K562 (cell line): ENCODE measurements at regions of chr11 and their contacts with region 1.

Region 1: DNA sequence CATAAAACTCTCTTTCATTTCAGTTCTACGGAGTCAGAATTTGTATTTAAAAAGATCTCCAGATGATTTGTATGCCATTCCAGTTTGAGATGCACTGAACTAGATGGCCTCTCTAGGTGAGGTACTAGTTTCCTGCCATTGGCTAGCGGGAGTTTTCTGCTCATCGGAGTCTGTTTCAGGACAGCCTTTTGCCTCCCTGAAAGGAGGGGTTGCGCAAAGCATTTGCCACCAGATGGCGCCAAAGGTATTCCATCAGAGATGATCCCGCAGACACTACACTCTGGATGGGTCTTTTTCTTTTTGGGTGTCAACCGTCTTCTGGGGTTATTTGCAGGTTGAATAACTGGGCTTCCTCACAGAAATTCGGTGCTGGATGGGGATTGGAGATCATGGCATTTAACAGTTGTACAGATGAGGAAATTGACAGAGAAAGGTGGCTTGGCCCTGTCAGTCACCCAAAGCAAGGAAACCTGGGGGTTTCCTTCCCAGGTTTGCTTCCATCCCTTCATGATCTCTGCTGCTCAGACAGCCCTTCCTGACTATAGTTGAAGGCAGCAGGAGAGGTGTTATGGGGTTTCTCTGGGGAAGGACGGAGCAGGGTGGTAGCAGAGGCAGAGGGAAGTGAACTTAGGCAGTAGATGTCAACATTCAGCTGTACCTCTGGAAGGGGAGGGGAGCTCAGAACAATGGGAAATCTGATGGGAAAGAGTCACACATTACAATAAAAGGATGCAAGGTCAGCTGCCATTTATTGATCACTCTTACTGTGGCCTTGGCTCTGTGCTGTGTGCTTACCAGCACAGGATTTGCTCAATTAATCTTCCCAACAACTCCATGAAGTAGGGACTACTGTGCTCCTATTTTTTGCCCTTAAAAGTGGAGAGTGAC is 81.6 kb downstream of the CCDC81 start:
- DNase-seq: peak; percentile 77 to 86 (median 84)
- ATAC-seq: peak; percentile 98
- H3K4me3 ChIP-seq: no peak overlapping the region
- H3K27ac ChIP-seq: no peak overlapping the region
- H3K4me1 ChIP-seq: no peaks in the 10 kb centered on the region
- H3K27me3 ChIP-seq: no peaks in the 10 kb centered on the region
- CTCF ChIP-seq: peak; percentile 83 to 93 (median 92)
- EP300 ChIP-seq: no peak
- POLR2A ChIP-seq: no peak
- RAD21 ChIP-seq: peak; percentile 97 to 98

Region 2: GRCh38 chr11:85854557-85855340 is 601.5 kb before region 1 on chr11:
- CTCF ChIA-PET with region 1: no interaction called
- POLR2A ChIA-PET with region 1: no interaction called
- in situ Hi-C with region 1: no loop called
- intact Hi-C with region 1: loop called (anchors 5 kb)
- DNase-seq: peak; percentile 90 to 94 (median 92)
- ATAC-seq: peak; percentile 99
- H3K4me3 ChIP-seq: peak overlapping the region; percentile 33
- H3K27ac ChIP-seq: peak overlapping the region; percentile 56
- H3K4me1 ChIP-seq: peaks cover 4 to 11% of the 10 kb centered on the region in 2 experiments; a peak in 2 of 5 replicates
- H3K27me3 ChIP-seq: no peaks in the 10 kb centered on the region
- CTCF ChIP-seq: peak; percentile 85 to 93 (median 88)
- EP300 ChIP-seq: no peak
- POLR2A ChIP-seq: peak; percentile 76
- RAD21 ChIP-seq: peak; percentile 91 to 97

Region 3: GRCh38 chr11:86408845-86409244 is 47.5 kb before region 1 on chr11:
- CTCF ChIA-PET with region 1: no interaction called
- POLR2A ChIA-PET with region 1: no interaction called
- in situ Hi-C with region 1: no loop called
- intact Hi-C with region 1: no loop called
- DNase-seq: no peak
- ATAC-seq: no peak
- H3K4me3 ChIP-seq: no peak overlapping the region
- H3K27ac ChIP-seq: no peak overlapping the region
- H3K4me1 ChIP-seq: no peaks in the 10 kb centered on the region
- H3K27me3 ChIP-seq: peaks cover 0 to 13% of the 10 kb centered on the region in 2 experiments; a peak in 2 of 5 replicates
- CTCF ChIP-seq: peak in 1 of 3 experiments; percentile 27; a peak in 3 of 6 replicates
- EP300 ChIP-seq: no peak
- POLR2A ChIP-seq: no peak
- RAD21 ChIP-seq: no peak

Region 4: DNA sequence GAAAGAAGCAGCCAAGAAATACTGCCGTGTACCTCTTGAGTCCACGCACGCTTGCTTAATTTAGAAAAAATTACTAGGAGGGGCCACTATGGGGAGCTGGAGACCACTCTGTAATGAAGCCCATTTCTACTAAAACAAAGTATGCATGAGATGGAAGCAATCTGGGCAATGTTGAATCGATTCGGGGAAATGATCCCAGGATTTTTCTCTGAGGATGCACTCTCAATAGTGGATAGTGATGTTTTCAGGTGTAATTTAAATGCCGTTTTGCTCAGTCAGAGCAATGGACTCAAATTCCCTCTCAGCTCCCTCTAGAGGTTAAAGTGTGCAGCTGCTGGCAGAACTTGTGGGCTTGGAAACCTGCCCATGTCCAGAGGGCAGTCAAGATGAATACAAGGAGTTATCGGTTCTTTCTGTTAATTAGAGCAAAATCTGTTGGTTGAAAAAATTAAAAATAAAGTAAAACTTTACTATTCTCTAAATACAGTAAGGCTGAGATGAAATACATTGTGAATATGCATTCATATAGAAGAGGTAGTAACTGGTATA is 152.0 kb after region 1 on chr11:
- CTCF ChIA-PET with region 1: interaction called, 4 read pairs
- POLR2A ChIA-PET with region 1: no interaction called
- in situ Hi-C with region 1: no loop called
- intact Hi-C with region 1: loop called (anchors 1 kb)
- DNase-seq: peak; percentile 62 to 76 (median 68)
- ATAC-seq: peak; percentile 98
- H3K4me3 ChIP-seq: no peak overlapping the region
- H3K27ac ChIP-seq: no peak overlapping the region
- H3K4me1 ChIP-seq: no peaks in the 10 kb centered on the region
- H3K27me3 ChIP-seq: no peaks in the 10 kb centered on the region
- CTCF ChIP-seq: peak; percentile 90 to 96 (median 95)
- EP300 ChIP-seq: no peak
- POLR2A ChIP-seq: no peak
- RAD21 ChIP-seq: peak; percentile 85 to 91

Region 5: GRCh38 chr11:86749376-86749775 is 293.1 kb after region 1 on chr11:
- CTCF ChIA-PET with region 1: interaction called, 7 read pairs
- POLR2A ChIA-PET with region 1: no interaction called
- in situ Hi-C with region 1: no loop called
- intact Hi-C with region 1: loop called (anchors 5 kb)
- DNase-seq: peak in 2 of 4 experiments; percentile 26 to 36
- ATAC-seq: peak; percentile 78
- H3K4me3 ChIP-seq: no peak overlapping the region
- H3K27ac ChIP-seq: no peak overlapping the region
- H3K4me1 ChIP-seq: no peaks in the 10 kb centered on the region
- H3K27me3 ChIP-seq: peaks cover 0 to 9% of the 10 kb centered on the region in 2 experiments; a peak in 2 of 5 replicates
- CTCF ChIP-seq: peak; percentile 66 to 98 (median 97)
- EP300 ChIP-seq: no peak
- POLR2A ChIP-seq: no peak
- RAD21 ChIP-seq: peak; percentile 79 to 88

Region 6: DNA sequence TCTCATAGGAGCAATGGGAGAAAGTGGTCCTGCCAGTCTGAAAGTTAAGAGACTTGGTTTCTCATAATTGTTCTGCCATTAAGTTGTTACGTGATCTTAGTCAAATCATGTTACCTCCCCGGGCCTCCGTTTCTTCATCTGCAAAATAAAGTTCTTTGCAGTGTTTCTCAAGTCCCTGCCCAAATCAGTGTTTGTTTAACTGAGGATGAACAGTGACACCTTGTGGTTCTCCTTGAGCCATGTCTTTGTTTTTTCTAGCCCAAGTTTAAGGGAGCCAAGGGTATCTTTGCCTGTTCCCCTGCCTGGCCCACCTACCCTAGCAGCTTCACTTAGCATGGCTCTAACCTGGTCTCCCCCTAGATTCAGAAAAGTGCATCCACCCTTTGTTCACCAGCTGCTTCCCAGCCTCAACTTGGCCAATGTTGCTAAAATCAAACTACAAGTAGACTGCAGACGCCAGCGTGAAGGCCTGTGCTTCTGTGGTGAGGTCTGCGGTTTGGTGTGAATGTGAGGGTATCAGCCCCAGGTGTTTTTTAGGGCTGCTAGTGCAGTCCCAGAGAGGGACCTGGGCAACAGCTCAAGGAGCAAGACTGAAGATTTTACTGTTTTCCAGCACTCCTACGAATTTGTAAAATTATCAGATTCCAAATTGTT is 463.4 kb after region 1 on chr11:
- CTCF ChIA-PET with region 1: interaction called, 6 read pairs
- POLR2A ChIA-PET with region 1: no interaction called
- in situ Hi-C with region 1: no loop called
- intact Hi-C with region 1: loop called (anchors 1 kb)
- DNase-seq: peak; percentile 35 to 69 (median 47)
- ATAC-seq: peak; percentile 88
- H3K4me3 ChIP-seq: no peak overlapping the region
- H3K27ac ChIP-seq: no peak overlapping the region
- H3K4me1 ChIP-seq: peaks cover 0 to 11% of the 10 kb centered on the region in 2 experiments; a peak in 3 of 5 replicates
- H3K27me3 ChIP-seq: no peaks in the 10 kb centered on the region
- CTCF ChIP-seq: peak; percentile 70 to 79 (median 71)
- EP300 ChIP-seq: no peak
- POLR2A ChIP-seq: no peak
- RAD21 ChIP-seq: peak; percentile 77 to 84